GM23248 (cell line): ENCODE measurements at regions of chr4 and their contacts with region 1.

Region 1: GRCh38 chr4:157992038-157992705 is 180.7 kb downstream of the GASK1B start:
- DNase-seq: peak; percentile 78
- H3K4me3 ChIP-seq: peak overlapping the region; percentile 79
- H3K27ac ChIP-seq: no peak overlapping the region
- H3K4me1 ChIP-seq: peaks cover 8% of the 10 kb centered on the region
- H3K27me3 ChIP-seq: no peaks in the 10 kb centered on the region

Region 2: GRCh38 chr4:158161551-158162354 is 169.6 kb after region 1 on chr4:
- in situ Hi-C with region 1: loop called (anchors 10 kb)
- DNase-seq: peak; percentile 88
- H3K4me3 ChIP-seq: peak overlapping the region; percentile 11
- H3K27ac ChIP-seq: peak overlapping the region; percentile 68
- H3K4me1 ChIP-seq: peaks cover 28% of the 10 kb centered on the region
- H3K27me3 ChIP-seq: no peaks in the 10 kb centered on the region